Right ventricle myocardium inferior (tissue), 1 donor: ENCODE measurements at regions of chrX and their contacts with region 1.

Region 1: DNA sequence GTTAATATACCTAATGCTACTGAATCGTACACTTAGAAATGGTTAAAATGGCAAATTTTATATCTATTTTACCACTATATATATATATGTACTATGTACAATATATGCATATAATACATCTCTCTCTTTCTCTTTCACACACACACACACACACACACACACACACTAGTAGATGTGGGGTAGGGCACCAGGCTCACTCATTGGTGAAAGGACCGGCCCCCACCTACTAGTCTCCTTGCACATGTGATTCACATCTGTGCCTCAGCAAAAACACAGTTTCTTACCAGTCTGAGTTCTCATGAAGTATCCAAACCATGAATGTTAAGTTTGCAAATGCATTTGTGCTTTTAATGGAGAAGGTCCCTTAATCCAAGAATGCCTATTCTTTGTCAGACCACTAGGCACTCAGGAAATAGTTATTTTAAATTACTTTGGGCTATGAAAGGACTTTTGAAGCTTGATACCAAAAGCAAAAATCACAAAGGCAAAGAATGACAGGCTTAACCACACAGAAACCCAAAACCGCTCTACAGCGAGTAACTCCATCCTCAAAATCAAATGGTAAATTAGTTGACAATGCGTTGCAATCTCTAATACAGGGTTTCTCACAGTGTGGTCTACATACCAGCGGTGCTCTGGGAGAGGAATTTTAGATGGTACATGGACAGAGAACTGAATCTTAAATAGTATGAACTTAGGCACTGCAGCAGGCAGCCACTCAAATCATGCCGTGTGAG is 5.8 kb downstream of the TSC22D3 start:
- DNase-seq: no peak
- ATAC-seq: no peak

Region 2: DNA sequence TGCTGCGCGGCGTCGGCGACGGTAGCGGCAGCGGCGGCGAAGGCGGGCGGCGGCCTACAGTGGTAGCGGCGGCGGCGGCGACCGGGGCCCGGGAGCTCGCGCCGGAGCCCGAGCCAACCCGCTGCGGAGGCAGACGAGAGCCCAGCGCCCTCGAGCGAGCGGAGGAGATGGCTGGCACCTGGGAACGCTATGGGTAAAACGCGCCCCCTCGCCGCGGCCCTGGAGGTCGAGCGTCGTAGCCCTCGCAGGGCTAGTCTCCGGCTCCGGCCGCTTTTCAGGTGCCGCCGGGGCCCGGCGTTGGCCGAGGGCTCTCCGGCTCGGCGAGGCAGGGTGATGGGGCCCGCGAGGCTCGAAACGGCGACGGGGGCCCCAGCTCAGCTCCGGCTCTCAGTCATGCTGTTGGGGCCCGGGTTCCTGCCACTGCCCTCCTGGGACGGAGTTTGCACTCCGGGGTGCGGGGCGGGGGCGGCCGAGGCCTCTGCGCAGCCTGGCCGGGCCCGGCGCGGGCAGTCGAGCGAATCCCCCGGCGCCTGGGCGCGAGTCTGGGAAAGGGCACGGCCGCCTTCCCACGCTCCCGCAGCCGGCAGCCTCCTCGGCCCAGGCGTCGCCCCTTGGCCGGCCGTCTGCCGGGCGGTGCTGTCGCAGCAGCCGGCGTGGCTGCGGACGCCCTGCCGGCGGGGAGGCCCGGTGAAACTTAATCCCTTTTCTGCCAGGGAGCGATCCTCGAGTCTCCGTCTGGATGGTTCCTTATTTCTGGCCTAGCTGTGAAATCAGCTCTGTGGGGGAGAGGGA is 56.7 kb after region 1 on chrX:
- intact Hi-C with region 1: loop called (anchors 2 kb)
- DNase-seq: peak; percentile 73
- ATAC-seq: peak; percentile 78